Mammary epithelial cell (primary cell): ENCODE measurements at regions of chr1 and their contacts with region 1.

Region 1: DNA sequence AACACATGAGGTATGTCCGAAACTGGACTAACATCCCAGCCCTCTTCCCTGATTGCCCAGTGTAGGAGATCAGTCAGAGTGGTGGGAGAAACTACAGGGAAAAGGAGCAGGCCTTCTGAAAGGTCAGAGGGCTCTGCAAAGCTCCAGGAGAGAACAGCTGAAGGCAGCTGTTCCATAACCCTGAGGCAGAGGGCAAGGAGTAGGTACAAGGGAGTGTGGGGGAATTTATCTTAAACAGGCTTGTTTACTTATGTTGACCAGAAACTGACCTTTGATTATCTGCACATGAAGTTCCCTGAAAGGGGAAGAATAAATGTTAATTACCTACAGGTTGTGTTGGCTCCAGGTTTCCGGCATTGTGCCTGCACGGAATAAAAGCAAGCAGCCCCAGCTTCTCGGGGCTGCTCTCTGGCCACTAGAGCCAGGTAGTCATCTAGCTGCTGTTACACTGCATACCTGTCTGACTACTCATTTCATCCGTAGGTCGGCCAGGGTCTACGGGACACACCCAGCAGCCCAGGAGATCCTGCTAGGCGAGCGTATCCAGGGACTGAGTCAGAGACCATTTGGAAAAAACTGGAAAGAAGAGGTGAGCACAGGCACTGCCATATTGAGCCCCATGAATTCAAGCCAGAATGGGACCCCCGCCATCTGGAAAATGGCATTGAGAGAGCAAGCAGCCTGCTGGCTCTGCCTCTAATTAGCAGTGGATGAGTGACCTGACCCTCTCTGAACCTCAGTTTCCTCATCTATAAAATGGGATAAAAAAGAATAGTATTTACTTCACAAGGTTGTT is 14.9 kb upstream of the PAQR7 start:
- DNase-seq: peak; percentile 96
- H3K4me3 ChIP-seq: no peak overlapping the region
- H3K27ac ChIP-seq: peak overlapping the region; percentile 75
- H3K4me1 ChIP-seq: peaks cover 49% of the 10 kb centered on the region
- H3K27me3 ChIP-seq: no peaks in the 10 kb centered on the region
- CTCF ChIP-seq: peak in 1 of 2 donors; percentile 3

Region 2: GRCh38 chr1:25819576-25820246 is 70.7 kb before region 1 on chr1 and contains the start of gene MTFR1L:
- CTCF ChIA-PET with region 1: no interaction called
- dilution Hi-C with region 1: no loop called
- in situ Hi-C with region 1: no loop called
- intact Hi-C with region 1: loop called (anchors 1 kb)
- DNase-seq: peak; percentile 90
- H3K4me3 ChIP-seq: peak within 1 kb of the TSS; percentile 72 to 90 (median 88)
- H3K27ac ChIP-seq: peak within 1 kb of the TSS; percentile 73
- H3K4me1 ChIP-seq: peaks cover 23% of the 10 kb centered on the region
- H3K27me3 ChIP-seq: no peaks in the 10 kb centered on the region
- CTCF ChIP-seq: no peak
- total RNA-seq, gene MTFR1L: 31.2 to 39.0 TPM

Region 3: GRCh38 chr1:25858906-25859789 is 31.3 kb before region 1 on chr1 and contains the start of gene AUNIP:
- CTCF ChIA-PET with region 1: no interaction called
- dilution Hi-C with region 1: loop called (anchors 5 kb)
- in situ Hi-C with region 1: no loop called
- intact Hi-C with region 1: loop called (anchors 1 kb)
- DNase-seq: peak; percentile 89
- H3K4me3 ChIP-seq: peak within 1 kb of the TSS; percentile 37 to 93 (median 88)
- H3K27ac ChIP-seq: peak within 1 kb of the TSS; percentile 73
- H3K4me1 ChIP-seq: peaks cover 9% of the 10 kb centered on the region
- H3K27me3 ChIP-seq: no peaks in the 10 kb centered on the region
- CTCF ChIP-seq: no peak
- total RNA-seq, gene AUNIP: 5.7 to 9.3 TPM

Region 4: GRCh38 chr1:25874934-25875855 is 15.2 kb before region 1 on chr1 and contains the start of gene PAQR7:
- CTCF ChIA-PET with region 1: interaction called, 5 read pairs
- dilution Hi-C with region 1: no loop called
- in situ Hi-C with region 1: no loop called
- intact Hi-C with region 1: loop called (anchors 1 kb)
- DNase-seq: peak; percentile 64
- H3K4me3 ChIP-seq: peak within 1 kb of the TSS; percentile 67 to 79 (median 71)
- H3K27ac ChIP-seq: peak within 1 kb of the TSS; percentile 4
- H3K4me1 ChIP-seq: peaks cover 56% of the 10 kb centered on the region
- H3K27me3 ChIP-seq: no peaks in the 10 kb centered on the region
- CTCF ChIP-seq: peak in 1 of 2 donors; percentile 23
- total RNA-seq, gene PAQR7: 21.6 to 28.3 TPM